ENCODE measurements at regions of chr2 and their contacts with region 1.

Region 1: GRCh38 chr2:118300832-118301231 is 212.6 kb downstream of the INSIG2 start:
- DNase-seq: no peak

Region 2: GRCh38 chr2:118350621-118351020 is 49.8 kb after region 1 on chr2:
- CTCF ChIA-PET with region 1: interaction called, 13 read pairs
- POLR2A ChIA-PET with region 1: no interaction called
- DNase-seq: no peak